ENCODE measurements at regions of chr1 and their contacts with region 1.

Region 1: DNA sequence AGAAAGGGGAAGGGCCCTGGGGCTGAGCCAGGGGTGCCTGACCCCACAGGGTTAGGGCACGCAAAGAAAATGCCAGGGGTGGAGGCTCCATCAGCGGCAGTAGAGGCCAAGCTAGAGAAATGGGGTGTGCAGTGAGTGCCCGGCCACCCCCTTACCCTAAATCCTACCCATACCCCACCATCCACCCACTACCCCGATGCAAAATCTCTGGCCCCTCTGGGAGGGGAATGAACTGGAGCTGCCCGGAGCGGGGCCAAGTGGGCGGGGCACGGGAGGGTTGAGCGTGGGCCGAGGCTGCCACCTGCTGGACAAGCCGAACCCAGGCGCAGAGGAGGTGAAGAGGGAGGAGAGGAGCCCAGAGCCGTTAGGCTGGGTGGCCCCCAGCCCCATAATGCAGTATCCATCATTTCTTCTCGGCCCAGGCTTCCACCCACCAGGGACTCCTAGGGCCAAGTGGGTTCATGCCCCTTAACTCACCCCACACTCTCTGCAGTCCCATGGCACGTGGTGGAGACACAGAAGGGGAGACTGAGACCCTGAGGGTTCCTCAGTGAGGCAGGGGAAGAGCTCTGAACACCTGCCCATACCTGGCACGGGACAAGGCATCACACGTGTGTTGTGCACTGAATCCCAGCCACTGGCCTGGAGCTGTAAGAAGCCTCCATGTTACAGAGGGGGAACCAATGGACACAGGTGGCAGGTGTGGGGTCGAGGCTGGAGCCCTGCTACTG is 1.4 kb upstream of the C1QC start:
- DNase-seq: peak; percentile 64
- H3K4me3 ChIP-seq: no peak overlapping the region
- H3K27ac ChIP-seq: no peak overlapping the region
- H3K4me1 ChIP-seq: no peaks in the 10 kb centered on the region
- CTCF ChIP-seq: peak; percentile 88

Region 2: DNA sequence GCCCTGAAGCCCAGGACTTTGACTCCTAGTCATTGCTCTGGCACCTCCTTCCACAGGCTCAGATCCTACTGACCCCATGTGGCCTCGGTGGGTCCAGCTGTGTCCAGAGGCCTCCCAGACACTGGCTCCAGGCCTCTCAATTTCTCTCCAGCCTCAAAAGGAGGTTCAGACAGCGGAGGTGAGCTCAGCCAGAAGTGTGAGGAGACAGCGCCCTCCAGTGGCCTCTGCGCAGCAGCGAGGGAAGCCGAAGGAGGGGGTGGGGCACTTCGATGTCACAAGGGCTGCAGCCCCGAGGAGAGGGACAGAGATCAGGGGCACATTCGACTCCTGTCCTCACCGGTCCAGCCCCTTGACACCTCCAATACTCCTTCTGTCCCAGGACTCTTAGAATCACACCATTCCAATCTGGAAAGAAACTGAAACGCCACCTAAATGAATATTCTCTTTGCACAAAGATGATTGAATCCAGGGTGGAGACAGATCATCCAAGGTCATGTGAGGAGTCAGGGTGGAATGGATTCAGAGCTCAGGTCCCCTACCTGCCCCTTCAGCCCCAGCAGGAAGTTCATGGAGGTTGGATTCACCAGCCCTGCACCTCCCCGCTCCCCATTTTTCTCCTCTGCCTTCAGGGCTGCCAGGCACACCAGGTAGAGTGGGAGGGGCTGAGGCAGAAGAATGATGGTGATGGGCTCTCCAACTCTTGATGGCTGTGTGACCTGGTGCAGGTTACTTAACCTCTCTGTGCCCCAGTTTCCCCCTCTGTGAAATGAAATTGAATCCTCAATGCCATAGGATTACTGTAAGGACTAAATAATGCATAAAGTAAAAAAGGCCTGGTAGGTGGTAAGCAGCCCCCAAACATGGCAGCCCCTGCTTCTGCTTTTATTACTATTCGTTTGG is 225.3 kb before region 1 on chr1:
- CTCF ChIA-PET with region 1: interaction called, 3 read pairs
- POLR2A ChIA-PET with region 1: no interaction called
- intact Hi-C with region 1: loop called (anchors 1 kb)
- DNase-seq: peak; percentile 72
- H3K4me3 ChIP-seq: no peak overlapping the region
- H3K27ac ChIP-seq: no peak overlapping the region
- H3K4me1 ChIP-seq: peaks cover 17% of the 10 kb centered on the region
- CTCF ChIP-seq: peak; percentile 95

Region 3: DNA sequence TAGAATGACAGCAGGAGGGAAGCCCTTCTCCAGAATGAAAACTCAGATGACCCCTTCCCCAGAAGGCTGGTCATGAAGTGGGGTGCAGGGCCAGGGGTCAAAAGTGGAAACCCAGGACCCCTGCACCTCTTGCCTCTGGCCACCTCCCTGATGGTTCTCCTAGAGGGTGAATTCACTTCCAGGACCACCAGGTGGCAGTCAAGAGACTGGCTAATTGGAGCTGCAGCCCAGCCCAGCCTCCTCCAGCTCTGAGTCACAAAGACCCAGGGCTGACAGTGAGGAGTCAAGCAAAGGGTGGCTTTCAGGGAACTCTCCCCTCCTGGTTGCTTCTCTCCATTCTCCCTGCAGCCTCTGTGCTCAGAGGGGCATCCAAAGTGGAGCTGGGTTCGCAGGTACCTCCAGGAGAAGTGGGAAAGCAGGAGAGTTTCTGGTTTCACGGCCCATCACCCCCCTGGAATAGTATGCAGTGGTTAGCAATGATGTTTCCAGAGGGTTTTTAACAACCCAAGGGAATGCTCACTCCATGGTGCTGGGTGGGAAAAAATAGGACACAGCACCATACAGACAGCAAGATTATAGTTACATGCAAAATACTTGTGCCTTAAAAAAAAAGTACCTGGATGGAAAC is 62.5 kb after region 1 on chr1:
- CTCF ChIA-PET with region 1: no interaction called
- POLR2A ChIA-PET with region 1: no interaction called
- intact Hi-C with region 1: no loop called
- DNase-seq: peak; percentile 75
- H3K4me3 ChIP-seq: no peak overlapping the region
- H3K27ac ChIP-seq: no peak overlapping the region
- H3K4me1 ChIP-seq: no peaks in the 10 kb centered on the region
- CTCF ChIP-seq: peak; percentile 81

Measured in OCI-LY7 (cell line).